ENCODE measurements at regions of chr14 and their contacts with region 1.

Region 1: DNA sequence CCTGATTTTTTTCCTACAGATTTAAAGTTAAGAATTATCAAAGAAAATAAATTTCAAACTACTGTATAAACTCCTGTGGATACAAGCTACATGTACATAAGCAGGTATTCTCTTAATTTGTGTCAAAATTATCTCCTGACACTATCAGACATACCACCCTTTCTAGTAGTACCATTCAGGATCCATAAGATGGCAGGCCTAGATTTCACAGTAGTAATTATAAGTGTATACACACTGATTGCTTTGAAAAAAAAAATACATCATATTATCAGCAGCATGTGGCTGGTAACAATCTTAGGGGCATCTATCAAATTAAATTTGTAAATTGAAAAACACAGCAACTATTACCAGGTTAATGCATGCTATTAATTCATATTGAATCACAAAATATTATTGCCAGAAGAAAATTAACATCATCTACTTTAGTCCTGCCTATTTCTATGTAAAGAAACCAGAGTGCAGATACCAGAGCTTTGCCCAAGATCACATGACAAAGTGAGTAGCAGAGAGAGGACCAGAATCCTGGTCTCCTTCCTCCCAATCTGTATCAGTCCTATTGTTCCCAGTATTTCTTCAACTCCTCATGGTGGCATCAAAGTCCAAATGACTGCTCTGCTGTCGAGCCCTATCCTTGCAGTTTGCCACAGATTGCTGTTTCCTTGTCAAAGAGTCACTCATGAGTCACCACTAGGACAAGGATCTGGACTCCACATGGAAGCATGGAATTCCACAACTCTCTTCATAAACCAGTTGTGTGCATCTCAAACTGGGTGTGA is 27.7 kb upstream of the CALM1 start:
- DNase-seq: peak in 2 of 5 donors; percentile 38 to 44
- H3K4me3 ChIP-seq: no peak overlapping the region
- H3K4me3 Mint-ChIP-seq: no peak overlapping the region
- H3K27ac ChIP-seq: no peak overlapping the region
- H3K27ac Mint-ChIP-seq: no peak overlapping the region
- H3K4me1 ChIP-seq: no peaks in the 10 kb centered on the region
- H3K4me1 Mint-ChIP-seq: peaks cover 0 to 5% (median 5%) of the 10 kb centered on the region in 3 donors
- H3K27me3 ChIP-seq: no peaks in the 10 kb centered on the region
- H3K27me3 Mint-ChIP-seq: peaks cover 0 to 3% of the 10 kb centered on the region in 2 donors

Region 2: GRCh38 chr14:90295870-90296516 is 73.1 kb before region 1 on chr14:
- CTCF ChIA-PET with region 1: no interaction called
- POLR2A ChIA-PET with region 1: no interaction called
- DNase-seq: no peak
- H3K4me3 ChIP-seq: no peak overlapping the region
- H3K4me3 Mint-ChIP-seq: no peak overlapping the region
- H3K27ac ChIP-seq: no peak overlapping the region
- H3K27ac Mint-ChIP-seq: no peak overlapping the region
- H3K4me1 ChIP-seq: no peaks in the 10 kb centered on the region
- H3K4me1 Mint-ChIP-seq: peaks cover 7% of the 10 kb centered on the region in 3 donors
- H3K27me3 ChIP-seq: no peaks in the 10 kb centered on the region
- H3K27me3 Mint-ChIP-seq: no peaks in the 10 kb centered on the region

Region 3: GRCh38 chr14:90697577-90698206 is 328.6 kb after region 1 on chr14:
- CTCF ChIA-PET with region 1: interaction called, 20 read pairs
- POLR2A ChIA-PET with region 1: no interaction called
- DNase-seq: peak; percentile 50 to 82 (median 53)
- H3K4me3 ChIP-seq: no peak overlapping the region
- H3K4me3 Mint-ChIP-seq: peak overlapping the region in 1 of 7 donors; percentile 15
- H3K27ac ChIP-seq: no peak overlapping the region
- H3K27ac Mint-ChIP-seq: peak overlapping the region in 1 of 8 donors; percentile 67
- H3K4me1 ChIP-seq: peaks cover 6% of the 10 kb centered on the region
- H3K4me1 Mint-ChIP-seq: peaks cover 0 to 1% (median 0%) of the 10 kb centered on the region in 3 donors
- H3K27me3 ChIP-seq: no peaks in the 10 kb centered on the region
- H3K27me3 Mint-ChIP-seq: peaks cover 0 to 5% of the 10 kb centered on the region in 2 donors